ENCODE measurements at regions of chr1 and their contacts with region 1.

Region 1: GRCh38 chr1:1307908-1308755 is at the starts of genes ACAP3 and PUSL1:
- DNase-seq: peak; percentile 88 to 94 (median 91)
- ATAC-seq: peak; percentile 87
- H3K4me3 ChIP-seq: peak within 1 kb of the TSS; percentile 83
- H3K4me3 Mint-ChIP-seq: peak within 1 kb of the TSS; percentile 82 to 94 (median 88)
- H3K27ac ChIP-seq: peak within 1 kb of the TSS; percentile 90
- H3K27ac Mint-ChIP-seq: peak within 1 kb of the TSS; percentile 47 to 94 (median 89)
- H3K4me1 ChIP-seq: peaks cover 31 to 34% of the 10 kb centered on the region in 2 donors
- H3K4me1 Mint-ChIP-seq: peaks cover 11 to 24% (median 17%) of the 10 kb centered on the region in 7 donors
- H3K27me3 ChIP-seq: no peaks in the 10 kb centered on the region
- H3K27me3 Mint-ChIP-seq: no peaks in the 10 kb centered on the region
- total RNA-seq, gene ACAP3: 51.5 to 70.8 (median 58.2) TPM
- total RNA-seq, gene PUSL1: 17.7 to 25.4 (median 19.4) TPM

Region 2: GRCh38 chr1:1013105-1013921 is 294.8 kb before region 1 on chr1 and contains the start of gene ISG15:
- CTCF ChIA-PET with region 1: no interaction called
- POLR2A ChIA-PET with region 1: no interaction called
- intact Hi-C with region 1: loop called (anchors 5 to 10 kb)
- DNase-seq: peak; percentile 73 to 90 (median 85)
- ATAC-seq: peak; percentile 98
- H3K4me3 ChIP-seq: peak within 1 kb of the TSS; percentile 95
- H3K4me3 Mint-ChIP-seq: peak within 1 kb of the TSS; percentile 89 to 100 (median 96)
- H3K27ac ChIP-seq: peak within 1 kb of the TSS; percentile 83
- H3K27ac Mint-ChIP-seq: peak within 1 kb of the TSS; percentile 96 to 100 (median 99)
- H3K4me1 ChIP-seq: peaks cover 13 to 18% of the 10 kb centered on the region in 2 donors
- H3K4me1 Mint-ChIP-seq: peaks cover 19 to 35% (median 29%) of the 10 kb centered on the region in 7 donors
- H3K27me3 ChIP-seq: no peaks in the 10 kb centered on the region
- H3K27me3 Mint-ChIP-seq: peaks cover 0 to 4% (median 1%) of the 10 kb centered on the region in 5 donors
- total RNA-seq, gene ISG15: 17.4 to 227 (median 25.4) TPM

Region 3: GRCh38 chr1:1231400-1232223 is 76.5 kb before region 1 on chr1 and contains the start of gene SDF4:
- CTCF ChIA-PET with region 1: no interaction called
- POLR2A ChIA-PET with region 1: no interaction called
- intact Hi-C with region 1: loop called (anchors 1 kb)
- DNase-seq: peak; percentile 90 to 98 (median 96)
- ATAC-seq: peak; percentile 96
- H3K4me3 ChIP-seq: peak within 1 kb of the TSS; percentile 90
- H3K4me3 Mint-ChIP-seq: peak within 1 kb of the TSS; percentile 89 to 96 (median 93)
- H3K27ac ChIP-seq: peak within 1 kb of the TSS; percentile 96
- H3K27ac Mint-ChIP-seq: peak within 1 kb of the TSS; percentile 68 to 94 (median 92)
- H3K4me1 ChIP-seq: peaks cover 12 to 28% of the 10 kb centered on the region in 2 donors
- H3K4me1 Mint-ChIP-seq: peaks cover 16 to 42% (median 33%) of the 10 kb centered on the region in 7 donors
- H3K27me3 ChIP-seq: no peaks in the 10 kb centered on the region
- H3K27me3 Mint-ChIP-seq: no peaks in the 10 kb centered on the region
- total RNA-seq, gene SDF4: 75.8 to 124 (median 110) TPM

Region 4: GRCh38 chr1:1324521-1325287 is 16.6 kb after region 1 on chr1 and contains the starts of genes CPTP and INTS11:
- CTCF ChIA-PET with region 1: interaction called, 3 read pairs
- POLR2A ChIA-PET with region 1: interaction called, 5 read pairs
- intact Hi-C with region 1: loop called (anchors 1 kb)
- DNase-seq: peak; percentile 93 to 97 (median 95)
- ATAC-seq: peak; percentile 93
- H3K4me3 ChIP-seq: peak within 1 kb of the TSS; percentile 77
- H3K4me3 Mint-ChIP-seq: peak within 1 kb of the TSS; percentile 83 to 96 (median 90)
- H3K27ac ChIP-seq: peak within 1 kb of the TSS; percentile 92
- H3K27ac Mint-ChIP-seq: peak within 1 kb of the TSS; percentile 67 to 94 (median 91)
- H3K4me1 ChIP-seq: peaks cover 18 to 34% of the 10 kb centered on the region in 2 donors
- H3K4me1 Mint-ChIP-seq: peaks cover 12 to 53% (median 31%) of the 10 kb centered on the region in 7 donors
- H3K27me3 ChIP-seq: no peaks in the 10 kb centered on the region
- H3K27me3 Mint-ChIP-seq: no peaks in the 10 kb centered on the region
- total RNA-seq, gene CPTP: 11.5 to 29.3 (median 19.1) TPM
- total RNA-seq, gene INTS11: 126 to 187 (median 161) TPM

Region 5: DNA sequence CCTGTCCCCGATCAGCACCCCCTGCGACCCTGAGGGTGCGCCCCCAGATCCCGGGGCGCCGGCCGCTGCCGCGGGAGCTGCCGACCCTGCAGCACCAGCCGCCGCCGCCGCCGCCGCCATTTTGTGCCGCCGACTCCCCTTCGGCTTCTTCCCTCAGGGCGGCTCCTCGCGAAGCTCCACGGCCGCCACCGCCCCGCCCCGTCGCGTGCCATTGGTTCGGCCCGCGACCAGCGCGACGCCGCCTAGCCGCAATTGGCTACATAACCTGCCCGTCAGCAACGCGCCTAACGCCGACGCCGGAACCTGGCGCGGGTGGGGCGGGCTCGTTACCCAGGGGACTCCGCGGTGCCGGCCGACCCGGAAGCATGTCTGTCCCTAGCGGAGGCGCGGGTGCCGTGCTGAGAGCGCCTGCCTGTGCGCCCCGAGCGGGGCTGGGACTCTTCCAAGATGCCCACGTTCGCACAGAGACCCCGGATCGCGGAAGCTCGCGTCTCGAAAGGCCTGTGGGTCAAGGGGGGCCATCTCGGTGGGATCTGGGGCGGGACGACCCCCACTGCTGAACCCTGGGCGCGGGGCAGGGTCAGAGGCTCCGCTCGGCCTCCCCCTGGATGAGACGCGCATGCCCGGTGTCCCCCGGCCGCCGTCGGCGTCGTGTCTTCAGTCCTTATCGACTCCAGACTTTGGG is 91.2 kb after region 1 on chr1 and contains the start of gene CCNL2:
- CTCF ChIA-PET with region 1: no interaction called
- POLR2A ChIA-PET with region 1: interaction called, 3 read pairs
- intact Hi-C with region 1: loop called in 1 of 2 experiments (anchors 1 kb)
- DNase-seq: peak; percentile 98 to 99 (median 99)
- ATAC-seq: peak; percentile 97
- H3K4me3 ChIP-seq: peak within 1 kb of the TSS; percentile 99
- H3K4me3 Mint-ChIP-seq: peak within 1 kb of the TSS; percentile 85 to 94 (median 90)
- H3K27ac ChIP-seq: peak within 1 kb of the TSS; percentile 91
- H3K27ac Mint-ChIP-seq: peak within 1 kb of the TSS; percentile 78 to 93 (median 89)
- H3K4me1 ChIP-seq: peaks cover 20 to 23% of the 10 kb centered on the region in 2 donors
- H3K4me1 Mint-ChIP-seq: peaks cover 22 to 65% (median 43%) of the 10 kb centered on the region in 7 donors
- H3K27me3 ChIP-seq: no peaks in the 10 kb centered on the region
- H3K27me3 Mint-ChIP-seq: no peaks in the 10 kb centered on the region
- total RNA-seq, gene CCNL2: 130 to 403 (median 278) TPM

Region 6: GRCh38 chr1:1451696-1452367 is 143.7 kb after region 1 on chr1:
- CTCF ChIA-PET with region 1: no interaction called
- POLR2A ChIA-PET with region 1: no interaction called
- intact Hi-C with region 1: no loop called
- DNase-seq: no peak
- ATAC-seq: no peak
- H3K4me3 ChIP-seq: no peak overlapping the region
- H3K4me3 Mint-ChIP-seq: no peak overlapping the region
- H3K27ac ChIP-seq: no peak overlapping the region
- H3K27ac Mint-ChIP-seq: no peak overlapping the region
- H3K4me1 ChIP-seq: no peaks in the 10 kb centered on the region
- H3K4me1 Mint-ChIP-seq: no peaks in the 10 kb centered on the region
- H3K27me3 ChIP-seq: no peaks in the 10 kb centered on the region
- H3K27me3 Mint-ChIP-seq: peaks cover 0 to 6% (median 0%) of the 10 kb centered on the region in 5 donors

Region 7: GRCh38 chr1:1528301-1529267 is 220.5 kb after region 1 on chr1:
- CTCF ChIA-PET with region 1: no interaction called
- POLR2A ChIA-PET with region 1: no interaction called
- intact Hi-C with region 1: no loop called
- DNase-seq: no peak
- ATAC-seq: no peak
- H3K4me3 ChIP-seq: no peak overlapping the region
- H3K4me3 Mint-ChIP-seq: no peak overlapping the region
- H3K27ac ChIP-seq: no peak overlapping the region
- H3K27ac Mint-ChIP-seq: no peak overlapping the region
- H3K4me1 ChIP-seq: no peaks in the 10 kb centered on the region
- H3K4me1 Mint-ChIP-seq: no peaks in the 10 kb centered on the region
- H3K27me3 ChIP-seq: no peaks in the 10 kb centered on the region
- H3K27me3 Mint-ChIP-seq: no peaks in the 10 kb centered on the region